ENCODE measurements at regions of chr22 and their contacts with region 1.

Region 1: GRCh38 chr22:46542011-46542985 is 4.9 kb upstream of the CELSR1 start:
- DNase-seq: peak in 1 of 2 donors; percentile 91
- H3K4me3 ChIP-seq: no peak overlapping the region
- H3K27ac ChIP-seq: peak overlapping the region; percentile 72
- H3K4me1 ChIP-seq: peaks cover 42% of the 10 kb centered on the region
- H3K27me3 ChIP-seq: no peaks in the 10 kb centered on the region
- CTCF ChIP-seq: peak; percentile 83 to 87 (median 86)
- POLR2A ChIP-seq: no peak

Region 2: GRCh38 chr22:44729391-44730021 is 1812.8 kb before region 1 on chr22:
- intact Hi-C with region 1: no loop called
- DNase-seq: no peak
- H3K4me3 ChIP-seq: peak overlapping the region; percentile 0 to 37
- H3K27ac ChIP-seq: peak overlapping the region; percentile 57
- H3K4me1 ChIP-seq: peaks cover 28% of the 10 kb centered on the region
- H3K27me3 ChIP-seq: no peaks in the 10 kb centered on the region
- CTCF ChIP-seq: peak in 1 of 3 experiments; percentile 19
- POLR2A ChIP-seq: no peak

Region 3: GRCh38 chr22:45852826-45853225 is 689.5 kb before region 1 on chr22:
- intact Hi-C with region 1: loop called (anchors 5 kb)
- DNase-seq: no peak
- H3K4me3 ChIP-seq: no peak overlapping the region
- H3K27ac ChIP-seq: no peak overlapping the region
- H3K4me1 ChIP-seq: no peaks in the 10 kb centered on the region
- H3K27me3 ChIP-seq: no peaks in the 10 kb centered on the region
- CTCF ChIP-seq: no peak
- POLR2A ChIP-seq: no peak

Region 4: DNA sequence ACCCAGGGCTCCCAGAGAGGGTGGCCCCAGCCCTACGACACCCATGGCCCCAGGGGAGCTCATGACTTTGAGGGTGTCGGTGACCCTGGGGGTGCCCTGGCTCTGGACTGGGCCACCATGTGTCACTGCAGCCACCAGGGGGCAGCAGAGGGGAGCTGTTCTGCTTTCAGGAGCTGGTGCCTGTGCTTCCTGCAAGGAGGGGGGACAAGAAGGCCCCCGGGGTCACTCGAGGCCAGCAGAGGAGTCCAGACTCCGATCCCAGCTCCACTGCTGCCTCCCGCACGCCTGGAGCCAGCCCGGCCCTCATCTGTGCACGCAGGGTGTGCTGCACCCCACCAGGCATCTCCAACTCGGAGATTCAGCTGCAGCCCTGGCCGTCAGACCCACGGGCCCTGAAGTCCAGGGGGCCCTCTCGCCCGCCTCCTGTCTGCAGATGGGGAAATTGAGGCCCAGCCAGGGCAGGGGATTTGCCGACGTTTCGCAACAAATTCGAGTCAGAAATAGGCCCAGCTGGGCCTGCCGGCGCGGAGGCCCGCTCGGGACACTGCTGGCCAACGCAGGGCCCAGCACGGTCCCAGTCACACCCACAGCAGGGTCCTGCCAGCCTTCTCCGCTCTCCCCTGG is 535.8 kb before region 1 on chr22:
- intact Hi-C with region 1: loop called (anchors 10 kb)
- DNase-seq: peak in 1 of 2 donors; percentile 96
- H3K4me3 ChIP-seq: peak overlapping the region; percentile 6 to 18
- H3K27ac ChIP-seq: peak overlapping the region; percentile 97
- H3K4me1 ChIP-seq: peaks cover 58% of the 10 kb centered on the region
- H3K27me3 ChIP-seq: no peaks in the 10 kb centered on the region
- CTCF ChIP-seq: peak; percentile 96 to 98 (median 97)
- POLR2A ChIP-seq: no peak

Region 5: DNA sequence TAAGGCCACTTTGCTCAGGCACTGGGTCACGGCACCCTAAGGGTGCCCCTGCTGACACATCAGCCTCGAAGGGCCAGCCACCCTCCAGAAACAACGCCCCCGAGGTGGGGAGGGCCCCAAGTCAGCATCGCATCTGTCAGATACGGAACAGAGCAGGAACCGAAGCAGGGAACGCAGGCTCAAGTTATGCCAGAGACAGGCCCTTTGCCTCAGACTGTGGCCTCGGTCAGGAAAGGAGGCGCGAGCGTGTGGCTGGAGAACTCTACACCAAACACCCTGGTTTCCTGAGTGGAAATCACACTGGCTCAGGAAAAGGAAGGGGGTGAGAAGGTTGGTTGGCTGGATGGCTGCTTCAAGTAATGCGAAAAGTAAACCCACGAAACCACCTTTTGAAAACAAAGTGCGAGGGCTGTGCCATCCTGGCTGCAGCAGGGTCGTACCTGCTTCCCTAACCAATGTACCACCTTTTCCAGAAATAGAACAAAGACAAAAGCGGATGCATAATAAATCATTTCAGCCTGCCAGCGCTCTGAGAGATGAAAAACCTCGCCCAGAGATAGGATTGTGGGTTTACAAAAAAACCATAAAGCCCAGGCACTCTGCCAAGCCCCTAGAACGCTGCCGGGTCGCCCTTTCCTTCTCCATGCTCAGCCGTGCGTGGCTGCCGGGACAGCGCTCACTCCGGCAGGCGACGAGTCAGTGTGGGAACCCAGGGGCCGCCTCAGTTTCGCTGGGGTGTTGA is 168.2 kb before region 1 on chr22:
- intact Hi-C with region 1: loop called (anchors 5 kb)
- DNase-seq: no peak
- H3K4me3 ChIP-seq: no peak overlapping the region
- H3K27ac ChIP-seq: peak overlapping the region; percentile 56
- H3K4me1 ChIP-seq: peaks cover 19% of the 10 kb centered on the region
- H3K27me3 ChIP-seq: no peaks in the 10 kb centered on the region
- CTCF ChIP-seq: no peak
- POLR2A ChIP-seq: no peak

Region 6: GRCh38 chr22:47328550-47329243 is 786.4 kb after region 1 on chr22:
- intact Hi-C with region 1: no loop called
- DNase-seq: peak in 1 of 2 donors; percentile 77
- H3K4me3 ChIP-seq: no peak overlapping the region
- H3K27ac ChIP-seq: no peak overlapping the region
- H3K4me1 ChIP-seq: no peaks in the 10 kb centered on the region
- H3K27me3 ChIP-seq: no peaks in the 10 kb centered on the region
- CTCF ChIP-seq: no peak
- POLR2A ChIP-seq: no peak

Measured in vagina (tissue), 2 donors.